ENCODE measurements at regions of chr14 and their contacts with region 1.

Region 1: GRCh38 chr14:75293920-75294642 is 15.5 kb downstream of the FOS start:
- DNase-seq: peak; percentile 93 to 97 (median 96)
- H3K4me3 ChIP-seq: peak overlapping the region; percentile 47 to 68
- H3K4me3 Mint-ChIP-seq: peak overlapping the region; percentile 83 to 97 (median 92)
- H3K27ac ChIP-seq: peak overlapping the region; percentile 90
- H3K27ac Mint-ChIP-seq: peak overlapping the region; percentile 84 to 99 (median 98)
- H3K4me1 ChIP-seq: peaks cover 30% of the 10 kb centered on the region
- H3K4me1 Mint-ChIP-seq: peaks cover 10 to 28% (median 22%) of the 10 kb centered on the region in 4 donors
- H3K27me3 ChIP-seq: no peaks in the 10 kb centered on the region
- H3K27me3 Mint-ChIP-seq: peaks cover 0 to 1% of the 10 kb centered on the region in 2 donors

Region 2: DNA sequence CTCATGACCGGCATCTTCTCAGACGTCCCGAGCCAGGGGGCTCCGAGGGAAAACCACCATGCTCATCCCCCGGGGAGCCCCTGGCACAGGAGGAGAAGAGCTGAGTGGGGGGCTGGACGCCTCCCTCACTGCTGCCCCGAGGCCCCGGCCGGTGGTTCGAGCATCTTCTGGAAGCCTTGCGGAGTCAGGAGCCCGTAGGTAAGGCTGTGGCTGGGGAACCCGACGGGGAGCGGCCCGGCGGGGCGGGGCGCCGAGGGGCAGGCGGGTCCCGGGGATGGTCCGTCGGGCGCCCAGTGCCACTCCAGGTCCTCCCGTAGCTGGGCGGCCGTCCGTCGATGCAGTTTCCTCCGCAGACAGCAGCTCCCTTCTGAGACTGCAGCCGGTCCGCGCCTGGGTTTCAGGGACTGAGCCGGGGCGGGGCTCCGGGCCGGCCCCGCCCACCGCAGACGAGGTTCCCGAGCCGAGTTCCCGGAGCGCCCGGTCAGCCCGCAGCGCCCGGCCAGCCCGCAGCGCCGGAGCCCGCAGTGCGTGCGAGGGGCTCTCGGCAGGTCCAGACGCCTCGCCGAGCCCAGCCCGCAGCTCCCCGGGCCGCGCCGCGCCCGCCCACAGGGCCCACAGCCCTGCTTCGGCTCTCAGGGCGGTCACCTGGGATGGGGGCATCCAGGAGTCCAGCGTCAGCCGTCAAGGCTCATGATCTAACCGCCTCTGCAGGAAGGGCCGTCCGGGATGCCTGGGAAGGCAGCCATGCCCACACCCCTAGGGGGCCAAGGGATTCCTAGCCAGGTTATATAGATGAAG is 338.7 kb before region 1 on chr14 and contains the start of gene PGF:
- CTCF ChIA-PET with region 1: no interaction called
- POLR2A ChIA-PET with region 1: no interaction called
- intact Hi-C with region 1: no loop called
- DNase-seq: peak in 3 of 5 donors; percentile 6 to 27 (median 19)
- H3K4me3 ChIP-seq: peak within 1 kb of the TSS in 1 of 2 donors; percentile 33
- H3K4me3 Mint-ChIP-seq: peak within 1 kb of the TSS; percentile 49 to 75 (median 68)
- H3K27ac ChIP-seq: no peak within 1 kb of the TSS
- H3K27ac Mint-ChIP-seq: no peak within 1 kb of the TSS
- H3K4me1 ChIP-seq: peaks cover 6% of the 10 kb centered on the region
- H3K4me1 Mint-ChIP-seq: peaks cover 0 to 2% (median 0%) of the 10 kb centered on the region in 4 donors
- H3K27me3 ChIP-seq: no peaks in the 10 kb centered on the region
- H3K27me3 Mint-ChIP-seq: peaks cover 0 to 5% of the 10 kb centered on the region in 2 donors
- total RNA-seq, gene PGF: not detected

Region 3: GRCh38 chr14:75126679-75127473 is 167.2 kb before region 1 on chr14 and contains the start of gene NEK9:
- CTCF ChIA-PET with region 1: interaction called, 273 read pairs
- POLR2A ChIA-PET with region 1: interaction called, 18 read pairs
- intact Hi-C with region 1: loop called (anchors 1 kb)
- DNase-seq: peak; percentile 86 to 92 (median 90)
- H3K4me3 ChIP-seq: peak within 1 kb of the TSS; percentile 80 to 99
- H3K4me3 Mint-ChIP-seq: peak within 1 kb of the TSS; percentile 88 to 98 (median 97)
- H3K27ac ChIP-seq: peak within 1 kb of the TSS; percentile 94
- H3K27ac Mint-ChIP-seq: peak within 1 kb of the TSS; percentile 95 to 99 (median 99)
- H3K4me1 ChIP-seq: peaks cover 42% of the 10 kb centered on the region
- H3K4me1 Mint-ChIP-seq: peaks cover 29 to 52% (median 34%) of the 10 kb centered on the region in 4 donors
- H3K27me3 ChIP-seq: no peaks in the 10 kb centered on the region
- H3K27me3 Mint-ChIP-seq: no peaks in the 10 kb centered on the region
- total RNA-seq, gene NEK9: 129 to 133 TPM

Region 4: GRCh38 chr14:75141967-75142366 is 152.1 kb before region 1 on chr14:
- CTCF ChIA-PET with region 1: interaction called, 250 read pairs
- POLR2A ChIA-PET with region 1: interaction called, 8 read pairs
- intact Hi-C with region 1: loop called (anchors 1 kb)
- DNase-seq: peak; percentile 37 to 63 (median 51)
- H3K4me3 ChIP-seq: no peak overlapping the region
- H3K4me3 Mint-ChIP-seq: peak overlapping the region in 3 of 8 donors; percentile 1 to 16 (median 7)
- H3K27ac ChIP-seq: no peak overlapping the region
- H3K27ac Mint-ChIP-seq: peak overlapping the region; percentile 56 to 93 (median 80)
- H3K4me1 ChIP-seq: peaks cover 72% of the 10 kb centered on the region
- H3K4me1 Mint-ChIP-seq: peaks cover 50 to 78% (median 63%) of the 10 kb centered on the region in 4 donors
- H3K27me3 ChIP-seq: no peaks in the 10 kb centered on the region
- H3K27me3 Mint-ChIP-seq: no peaks in the 10 kb centered on the region

Region 5: DNA sequence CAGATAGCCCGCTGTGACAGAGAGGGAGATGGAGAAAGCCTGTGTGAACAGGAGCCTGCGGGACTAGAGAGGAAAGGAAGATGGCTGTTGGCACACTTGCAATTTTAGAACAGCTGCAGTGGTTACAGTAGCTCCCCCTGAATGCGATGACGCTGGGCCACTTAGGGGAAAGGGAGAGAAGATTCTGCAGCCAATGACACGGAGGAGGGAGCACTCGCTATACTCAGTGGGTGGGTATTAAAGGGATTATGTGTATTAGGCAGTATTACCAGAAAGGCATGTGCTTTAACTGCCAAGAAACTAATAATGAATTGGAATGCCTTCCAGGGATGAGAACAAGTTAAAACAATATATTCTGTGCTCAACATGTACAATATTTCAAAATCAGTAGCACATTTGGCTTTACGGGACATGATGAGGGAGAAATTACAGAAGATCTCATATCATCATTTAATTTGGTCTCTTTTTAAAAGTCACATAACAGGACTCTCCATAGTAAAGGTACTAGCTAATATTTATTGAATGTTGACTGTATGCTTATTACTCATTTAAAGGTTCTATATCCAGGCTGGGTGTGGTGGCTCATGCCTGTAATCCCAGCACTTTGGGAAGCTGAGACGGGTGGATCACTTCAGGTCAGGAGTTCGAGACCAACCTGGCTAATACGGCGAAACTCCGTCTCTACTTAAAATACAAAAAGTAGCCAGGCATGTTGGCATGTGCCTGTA is 51.4 kb before region 1 on chr14:
- CTCF ChIA-PET with region 1: interaction called, 22 read pairs
- POLR2A ChIA-PET with region 1: interaction called, 31 read pairs
- intact Hi-C with region 1: no loop called
- DNase-seq: no peak
- H3K4me3 ChIP-seq: no peak overlapping the region
- H3K4me3 Mint-ChIP-seq: no peak overlapping the region
- H3K27ac ChIP-seq: no peak overlapping the region
- H3K27ac Mint-ChIP-seq: peak overlapping the region in 1 of 7 donors; percentile 38
- H3K4me1 ChIP-seq: peaks cover 20% of the 10 kb centered on the region
- H3K4me1 Mint-ChIP-seq: peaks cover 12 to 24% (median 17%) of the 10 kb centered on the region in 4 donors
- H3K27me3 ChIP-seq: no peaks in the 10 kb centered on the region
- H3K27me3 Mint-ChIP-seq: no peaks in the 10 kb centered on the region

Region 6: GRCh38 chr14:75258615-75259466 is 35.2 kb before region 1 on chr14:
- CTCF ChIA-PET with region 1: interaction called, 7 read pairs
- POLR2A ChIA-PET with region 1: interaction called, 47 read pairs
- intact Hi-C with region 1: loop called (anchors 1 kb)
- DNase-seq: peak; percentile 99 to 100 (median 100)
- H3K4me3 ChIP-seq: peak overlapping the region; percentile 52 to 54
- H3K4me3 Mint-ChIP-seq: peak overlapping the region; percentile 82 to 90 (median 88)
- H3K27ac ChIP-seq: peak overlapping the region; percentile 95
- H3K27ac Mint-ChIP-seq: peak overlapping the region; percentile 98 to 100 (median 100)
- H3K4me1 ChIP-seq: peaks cover 23% of the 10 kb centered on the region
- H3K4me1 Mint-ChIP-seq: peaks cover 21 to 44% (median 33%) of the 10 kb centered on the region in 4 donors
- H3K27me3 ChIP-seq: no peaks in the 10 kb centered on the region
- H3K27me3 Mint-ChIP-seq: no peaks in the 10 kb centered on the region

Region 7: GRCh38 chr14:75350505-75351060 is 56.5 kb after region 1 on chr14:
- CTCF ChIA-PET with region 1: no interaction called
- POLR2A ChIA-PET with region 1: no interaction called
- intact Hi-C with region 1: no loop called
- DNase-seq: no peak
- H3K4me3 ChIP-seq: no peak overlapping the region
- H3K4me3 Mint-ChIP-seq: no peak overlapping the region
- H3K27ac ChIP-seq: no peak overlapping the region
- H3K27ac Mint-ChIP-seq: no peak overlapping the region
- H3K4me1 ChIP-seq: no peaks in the 10 kb centered on the region
- H3K4me1 Mint-ChIP-seq: no peaks in the 10 kb centered on the region
- H3K27me3 ChIP-seq: no peaks in the 10 kb centered on the region
- H3K27me3 Mint-ChIP-seq: peaks cover under 1 to 1% of the 10 kb centered on the region in 2 donors